Spleen (tissue), 13 donors: ENCODE measurements at regions of chr1 and their contacts with region 1.

Region 1: DNA sequence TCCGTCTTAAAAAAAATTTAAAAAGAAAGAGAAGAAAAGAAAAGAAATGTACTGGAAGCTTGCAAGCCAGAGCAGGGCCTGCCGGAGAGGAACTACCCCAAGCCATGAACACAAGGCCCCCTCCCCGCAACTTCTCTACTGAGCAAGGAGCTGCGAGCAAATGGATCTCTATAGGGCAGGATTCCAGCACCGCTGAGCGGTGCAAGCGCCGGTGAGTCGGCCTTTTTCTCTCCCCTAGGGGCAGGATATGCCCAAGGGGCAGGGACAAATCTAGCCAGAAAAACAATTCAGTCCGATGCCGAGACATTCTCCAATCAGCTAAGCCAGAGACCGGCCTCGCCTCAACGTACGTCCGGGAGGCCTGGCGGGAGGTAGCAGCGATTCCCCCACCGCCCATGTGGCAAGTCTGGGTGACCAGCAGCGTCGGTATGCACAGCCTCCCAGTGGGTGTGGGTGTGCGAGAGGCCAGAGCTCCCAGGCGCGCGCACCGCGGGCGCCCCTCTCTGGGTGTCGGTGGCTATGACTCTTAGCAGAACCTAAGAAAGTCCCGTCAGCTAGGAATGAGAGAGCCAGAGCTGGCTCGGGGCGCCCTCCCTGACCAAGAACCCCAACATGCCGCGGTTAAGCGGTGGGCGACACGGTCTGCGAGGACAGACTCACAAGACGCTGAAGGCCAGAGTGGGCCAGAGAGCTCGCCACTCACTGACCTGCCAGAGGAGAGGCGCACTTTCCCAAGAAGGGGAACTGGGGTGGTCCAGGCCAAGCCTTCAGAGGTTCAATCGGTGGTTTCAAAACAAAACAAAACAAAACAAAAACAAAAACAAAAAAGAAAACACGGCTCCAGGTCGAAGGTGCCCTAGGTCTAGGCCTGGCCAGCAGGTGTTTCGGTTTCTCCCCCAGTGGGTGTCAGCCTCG is 1.9 kb downstream of the CSMD2 start:
- DNase-seq: peak; percentile 85
- H3K4me3 ChIP-seq: peak overlapping the region; percentile 9 to 66 (median 29)
- H3K27ac ChIP-seq: peak overlapping the region in 1 of 8 donors; percentile 2
- H3K4me1 ChIP-seq: peaks cover 11 to 43% (median 29%) of the 10 kb centered on the region in 6 donors
- H3K27me3 ChIP-seq: peaks cover 5 to 93% (median 52%) of the 10 kb centered on the region in 7 donors
- CTCF ChIP-seq: peak in 7 of 11 experiments; percentile 34 to 67 (median 43)
- POLR2A ChIP-seq: no peak

Region 2: GRCh38 chr1:33616773-33617172 is 546.3 kb before region 1 on chr1:
- intact Hi-C with region 1: no loop called
- DNase-seq: no peak
- H3K4me3 ChIP-seq: no peak overlapping the region
- H3K27ac ChIP-seq: no peak overlapping the region
- H3K4me1 ChIP-seq: peaks cover 0 to 7% (median 3%) of the 10 kb centered on the region in 6 donors
- H3K27me3 ChIP-seq: peaks cover 0 to 44% (median 0%) of the 10 kb centered on the region in 7 donors
- CTCF ChIP-seq: no peak
- POLR2A ChIP-seq: no peak

Region 3: DNA sequence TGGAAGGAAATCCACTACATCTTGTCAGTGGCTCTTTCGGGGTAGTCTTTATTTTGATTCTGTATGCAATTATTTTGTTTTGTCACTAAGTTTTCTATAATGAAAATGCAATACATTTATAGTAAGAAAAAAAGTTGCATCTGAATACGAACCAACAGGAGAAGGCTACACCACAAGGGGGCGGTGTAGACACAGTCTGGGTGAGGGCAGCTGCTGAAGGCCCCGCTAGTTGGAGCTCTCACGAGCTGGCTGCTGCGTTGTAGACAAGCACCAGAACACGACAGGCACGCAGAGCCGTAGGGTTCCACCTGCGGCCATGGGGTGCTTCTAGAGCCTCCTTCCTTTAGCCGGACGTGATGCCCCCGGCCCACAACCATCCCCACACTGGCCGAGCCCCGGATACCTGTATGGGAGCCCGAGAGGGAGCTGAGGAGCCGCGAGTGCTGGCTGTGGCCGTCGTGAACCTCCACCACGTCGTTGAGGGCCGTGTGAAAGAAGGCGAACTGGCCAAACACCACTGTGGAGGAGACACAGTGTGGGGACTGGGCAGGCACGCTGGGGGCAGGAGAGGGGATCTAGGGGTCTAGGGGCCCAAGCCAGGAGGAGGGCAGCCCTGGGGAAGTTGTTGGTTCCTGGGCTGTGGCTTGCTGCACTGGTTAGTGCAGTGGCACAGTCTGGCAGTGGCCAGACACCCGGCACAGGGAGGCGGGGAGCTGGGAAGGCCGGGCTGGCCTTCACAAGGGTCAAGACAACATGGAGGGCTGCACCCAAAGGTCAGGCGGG is 529.9 kb before region 1 on chr1:
- intact Hi-C with region 1: loop called (anchors 10 kb)
- DNase-seq: peak; percentile 92
- H3K4me3 ChIP-seq: no peak overlapping the region
- H3K27ac ChIP-seq: no peak overlapping the region
- H3K4me1 ChIP-seq: peaks cover 0 to 6% (median 5%) of the 10 kb centered on the region in 6 donors
- H3K27me3 ChIP-seq: peaks cover 0 to 55% (median 0%) of the 10 kb centered on the region in 7 donors
- CTCF ChIP-seq: peak in 10 of 11 experiments; percentile 26 to 92 (median 83)
- POLR2A ChIP-seq: no peak

Region 4: GRCh38 chr1:33735621-33736020 is 427.5 kb before region 1 on chr1:
- intact Hi-C with region 1: loop called (anchors 10 kb)
- DNase-seq: no peak
- H3K4me3 ChIP-seq: no peak overlapping the region
- H3K27ac ChIP-seq: no peak overlapping the region
- H3K4me1 ChIP-seq: no peaks in the 10 kb centered on the region
- H3K27me3 ChIP-seq: peaks cover 0 to 62% (median 4%) of the 10 kb centered on the region in 7 donors
- CTCF ChIP-seq: peak in 4 of 11 experiments; percentile 11 to 39 (median 24)
- POLR2A ChIP-seq: no peak

Region 5: GRCh38 chr1:33897092-33897725 is 265.9 kb before region 1 on chr1:
- intact Hi-C with region 1: loop called (anchors 5 kb)
- DNase-seq: no peak
- H3K4me3 ChIP-seq: no peak overlapping the region
- H3K27ac ChIP-seq: no peak overlapping the region
- H3K4me1 ChIP-seq: peaks cover 0 to 8% (median 0%) of the 10 kb centered on the region in 6 donors
- H3K27me3 ChIP-seq: peaks cover 0 to 5% (median 0%) of the 10 kb centered on the region in 7 donors
- CTCF ChIP-seq: no peak
- POLR2A ChIP-seq: no peak

Region 6: GRCh38 chr1:34213956-34214355 is 50.8 kb after region 1 on chr1:
- intact Hi-C with region 1: no loop called
- DNase-seq: no peak
- H3K4me3 ChIP-seq: no peak overlapping the region
- H3K27ac ChIP-seq: no peak overlapping the region
- H3K4me1 ChIP-seq: no peaks in the 10 kb centered on the region
- H3K27me3 ChIP-seq: peaks cover 0 to 49% (median 0%) of the 10 kb centered on the region in 7 donors
- CTCF ChIP-seq: no peak
- POLR2A ChIP-seq: no peak